PC-9 (cell line): ENCODE measurements at regions of chr5 and their contacts with region 1.

Region 1: GRCh38 chr5:144142139-144142823 is 28.2 kb downstream of the YIPF5 start:
- DNase-seq: peak in 1 of 2 experiments; percentile 11
- H3K4me3 ChIP-seq: no peak overlapping the region
- H3K27ac ChIP-seq: no peak overlapping the region
- H3K4me1 ChIP-seq: 0 out of 2 replicates have a peak, but pooled peaks cover 8% of the 10 kb centered on the region
- H3K27me3 ChIP-seq: no peaks in the 10 kb centered on the region
- CTCF ChIP-seq: peak; percentile 85

Region 2: DNA sequence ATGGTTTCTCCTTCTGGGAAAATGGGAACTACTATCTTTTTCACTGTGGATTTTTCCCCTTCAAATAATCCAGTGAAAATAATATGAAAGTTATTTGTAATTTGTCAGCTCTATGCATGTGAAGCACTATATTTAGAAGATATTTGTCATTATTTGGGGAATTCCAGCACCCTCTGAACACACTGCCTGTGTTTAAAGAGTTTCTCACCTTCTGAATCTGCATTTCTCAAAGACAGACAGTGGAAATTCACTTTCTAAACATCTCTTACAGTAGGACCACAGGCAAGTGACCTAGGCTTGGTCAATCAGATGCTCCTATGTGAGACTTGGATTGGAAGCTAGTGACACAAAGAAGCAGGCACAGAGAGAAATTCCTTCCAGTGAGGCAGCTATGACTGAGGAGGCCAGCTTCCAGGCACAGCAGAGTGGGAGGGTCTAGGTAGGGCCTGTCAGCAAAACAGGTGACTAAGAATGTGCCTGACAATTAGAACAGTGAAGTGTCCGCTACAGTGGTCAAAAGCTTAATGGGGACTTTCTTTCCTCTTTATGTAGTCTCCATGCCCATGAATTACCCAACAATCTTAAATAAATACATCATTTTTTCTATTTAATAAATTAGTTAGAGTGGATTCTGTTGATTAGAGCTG is 163.1 kb before region 1 on chr5:
- CTCF ChIA-PET with region 1: no interaction called
- POLR2A ChIA-PET with region 1: no interaction called
- intact Hi-C with region 1: loop called (anchors 5 kb)
- DNase-seq: no peak
- H3K4me3 ChIP-seq: no peak overlapping the region
- H3K27ac ChIP-seq: no peak overlapping the region
- H3K4me1 ChIP-seq: peaks cover 35% of the 10 kb centered on the region
- H3K27me3 ChIP-seq: no peaks in the 10 kb centered on the region
- CTCF ChIP-seq: no peak